ENCODE measurements at regions of chr2 and their contacts with region 1.

Region 1: GRCh38 chr2:167212014-167212648 is 323.9 kb downstream of the XIRP2 start:
- DNase-seq: no peak
- H3K4me3 ChIP-seq: no peak overlapping the region
- H3K27ac ChIP-seq: no peak overlapping the region
- H3K4me1 ChIP-seq: peaks cover 40% of the 10 kb centered on the region
- H3K27me3 ChIP-seq: no peaks in the 10 kb centered on the region
- CTCF ChIP-seq: peak; percentile 80

Region 2: GRCh38 chr2:166539340-166540162 is 672.6 kb before region 1 on chr2:
- intact Hi-C with region 1: loop called (anchors 10 kb)
- DNase-seq: no peak
- H3K4me3 ChIP-seq: no peak overlapping the region
- H3K27ac ChIP-seq: no peak overlapping the region
- H3K4me1 ChIP-seq: no peaks in the 10 kb centered on the region
- H3K27me3 ChIP-seq: no peaks in the 10 kb centered on the region
- CTCF ChIP-seq: peak; percentile 82

Region 3: DNA sequence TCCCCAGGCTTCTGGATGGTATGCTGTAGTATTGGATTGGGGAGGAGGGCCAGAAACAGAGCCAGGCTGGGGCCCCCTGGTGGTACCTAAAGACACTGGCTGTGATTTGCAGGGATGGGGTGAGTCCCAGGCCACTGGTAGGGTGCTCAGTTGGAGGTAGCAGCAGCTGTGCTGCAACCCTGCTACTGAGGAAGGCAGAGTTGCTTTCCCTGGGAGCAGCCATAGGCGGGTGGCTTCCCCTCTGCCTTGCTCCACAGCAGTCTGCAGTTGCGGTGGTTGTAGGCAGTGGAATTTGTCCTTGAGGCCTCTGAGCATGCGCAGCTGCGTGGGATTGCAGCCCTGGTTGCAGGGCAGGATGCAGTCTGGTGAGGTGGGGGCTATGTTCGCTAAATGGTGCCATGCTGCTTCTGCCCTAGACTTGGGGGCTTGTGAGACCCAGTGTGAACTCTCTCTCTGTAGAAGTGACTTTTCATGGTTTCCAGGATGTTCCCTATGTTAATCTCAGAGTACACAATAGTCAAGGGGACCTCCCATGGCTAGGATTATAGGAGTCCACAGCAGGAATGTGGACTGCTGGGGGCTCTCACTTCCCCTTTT is 119.6 kb after region 1 on chr2:
- intact Hi-C with region 1: no loop called
- DNase-seq: no peak
- H3K4me3 ChIP-seq: no peak overlapping the region
- H3K27ac ChIP-seq: no peak overlapping the region
- H3K4me1 ChIP-seq: no peaks in the 10 kb centered on the region
- H3K27me3 ChIP-seq: no peaks in the 10 kb centered on the region
- CTCF ChIP-seq: peak; percentile 21